ENCODE measurements at regions of chr1 and their contacts with region 1.

Region 1: GRCh38 chr1:28248283-28249012 is 10.9 kb upstream of the SESN2 start:
- DNase-seq: peak; percentile 62 to 90 (median 79)
- ATAC-seq: peak in 3 of 4 experiments; percentile 31 to 41 (median 39)
- H3K4me3 ChIP-seq: peak overlapping the region; percentile 2 to 7
- H3K4me3 Mint-ChIP-seq: peak overlapping the region; percentile 65 to 93 (median 83)
- H3K27ac ChIP-seq: peak overlapping the region; percentile 95
- H3K27ac Mint-ChIP-seq: peak overlapping the region; percentile 88 to 94
- H3K4me1 ChIP-seq: peaks cover 43 to 47% of the 10 kb centered on the region in 2 experiments
- H3K4me1 Mint-ChIP-seq: peaks cover 44 to 53% (median 51%) of the 10 kb centered on the region in 3 donors
- H3K27me3 ChIP-seq: no peaks in the 10 kb centered on the region
- H3K27me3 Mint-ChIP-seq: no peaks in the 10 kb centered on the region

Region 2: DNA sequence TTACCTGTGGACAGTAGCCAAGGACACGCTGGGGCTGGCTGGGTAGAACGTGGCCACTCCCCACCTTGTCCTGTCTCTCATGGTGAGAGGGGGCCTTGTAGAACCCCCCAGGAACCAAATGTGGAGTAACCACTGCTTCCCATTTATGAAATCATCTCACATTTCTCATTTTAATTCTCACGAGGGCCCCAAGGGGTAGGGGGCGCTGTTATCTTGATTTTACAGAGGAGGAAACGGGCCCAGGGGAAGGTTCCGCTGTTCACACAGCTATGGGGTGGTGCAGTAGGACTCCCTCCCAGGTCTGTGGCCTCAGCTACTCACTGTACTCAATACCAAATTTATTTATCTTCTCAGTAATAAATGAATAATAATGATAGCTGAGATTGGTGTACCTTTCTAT is 308.2 kb before region 1 on chr1:
- CTCF ChIA-PET with region 1: no interaction called
- POLR2A ChIA-PET with region 1: no interaction called
- DNase-seq: peak; percentile 58 to 84 (median 74)
- ATAC-seq: peak; percentile 80 to 89 (median 86)
- H3K4me3 ChIP-seq: no peak overlapping the region
- H3K4me3 Mint-ChIP-seq: no peak overlapping the region
- H3K27ac ChIP-seq: peak overlapping the region; percentile 52
- H3K27ac Mint-ChIP-seq: peak overlapping the region; percentile 77 to 79
- H3K4me1 ChIP-seq: peaks cover 11 to 31% of the 10 kb centered on the region in 2 experiments
- H3K4me1 Mint-ChIP-seq: peaks cover 24 to 51% (median 49%) of the 10 kb centered on the region in 3 donors
- H3K27me3 ChIP-seq: peaks cover 0 to 8% of the 10 kb centered on the region in 2 experiments
- H3K27me3 Mint-ChIP-seq: peaks cover 6 to 7% of the 10 kb centered on the region in 2 donors

Region 3: GRCh38 chr1:28199328-28200233 is 48.9 kb before region 1 on chr1:
- CTCF ChIA-PET with region 1: no interaction called
- POLR2A ChIA-PET with region 1: no interaction called
- DNase-seq: peak; percentile 22 to 81 (median 64)
- ATAC-seq: peak; percentile 93 to 97 (median 96)
- H3K4me3 ChIP-seq: peak overlapping the region in 1 of 2 donors; percentile 25
- H3K4me3 Mint-ChIP-seq: peak overlapping the region; percentile 42 to 72 (median 42)
- H3K27ac ChIP-seq: peak overlapping the region; percentile 62
- H3K27ac Mint-ChIP-seq: peak overlapping the region; percentile 85 to 93
- H3K4me1 ChIP-seq: peaks cover 10 to 70% of the 10 kb centered on the region in 2 experiments
- H3K4me1 Mint-ChIP-seq: peaks cover 37 to 43% (median 41%) of the 10 kb centered on the region in 3 donors
- H3K27me3 ChIP-seq: peaks cover 0 to 3% of the 10 kb centered on the region in 2 experiments
- H3K27me3 Mint-ChIP-seq: no peaks in the 10 kb centered on the region

Region 4: DNA sequence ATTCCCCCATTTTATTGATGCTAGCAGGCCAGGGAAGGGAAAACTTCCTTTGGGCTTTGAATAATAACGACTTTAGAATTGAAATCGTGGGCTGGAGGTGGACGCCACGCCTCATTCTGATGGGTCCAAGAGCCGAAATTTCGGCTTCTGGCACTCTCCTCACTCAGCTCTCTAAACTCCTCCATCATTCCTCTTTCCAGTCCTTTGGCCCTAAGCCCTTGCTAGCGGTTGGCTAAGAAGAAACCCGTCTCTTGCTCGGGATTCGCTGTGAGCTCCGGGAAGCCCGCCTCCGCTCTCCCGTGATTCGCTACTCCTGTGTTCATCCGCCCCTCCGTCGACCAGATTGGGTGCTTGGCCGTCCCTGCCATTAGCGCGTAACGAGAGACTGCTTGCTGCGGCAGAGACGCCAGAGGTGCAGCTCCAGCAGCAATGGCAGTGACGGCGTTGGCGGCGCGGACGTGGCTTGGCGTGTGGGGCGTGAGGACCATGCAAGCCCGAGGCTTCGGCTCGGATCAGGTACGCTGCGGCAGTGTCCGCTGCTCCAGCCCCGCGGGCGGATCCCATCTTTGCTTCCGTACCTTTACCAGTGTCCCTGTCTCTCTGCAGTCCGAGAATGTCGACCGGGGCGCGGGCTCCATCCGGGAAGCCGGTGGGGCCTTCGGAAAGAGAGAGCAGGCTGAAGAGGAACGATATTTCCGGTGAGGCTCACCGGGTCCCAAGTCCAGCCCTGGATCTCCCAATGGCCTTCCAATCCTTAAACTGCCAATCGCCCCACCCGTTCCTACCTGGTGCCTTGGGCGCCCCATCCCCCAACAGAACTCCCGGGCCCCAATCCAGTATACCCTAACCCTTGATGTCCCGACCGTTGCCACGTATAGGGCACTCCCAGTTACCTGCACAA is 12.4 kb before region 1 on chr1 and contains the start of gene ATP5IF1:
- CTCF ChIA-PET with region 1: interaction called, 4 to 20 read pairs
- POLR2A ChIA-PET with region 1: interaction called, 19 to 37 read pairs
- DNase-seq: peak; percentile 80 to 97 (median 94)
- ATAC-seq: peak; percentile 95 to 97 (median 97)
- H3K4me3 ChIP-seq: peak within 1 kb of the TSS; percentile 97 to 99
- H3K4me3 Mint-ChIP-seq: no peak within 1 kb of the TSS
- H3K27ac ChIP-seq: peak within 1 kb of the TSS; percentile 83
- H3K27ac Mint-ChIP-seq: no peak within 1 kb of the TSS
- H3K4me1 ChIP-seq: peaks cover 18 to 43% of the 10 kb centered on the region in 2 experiments
- H3K4me1 Mint-ChIP-seq: peaks cover 21 to 28% (median 23%) of the 10 kb centered on the region in 3 donors
- H3K27me3 ChIP-seq: no peaks in the 10 kb centered on the region
- H3K27me3 Mint-ChIP-seq: no peaks in the 10 kb centered on the region
- total RNA-seq, gene ATP5IF1: 74.4 to 106 (median 93.5) TPM

Region 5: GRCh38 chr1:28329395-28330153 is 81.1 kb after region 1 on chr1:
- CTCF ChIA-PET with region 1: interaction called in 1 of 2 experiments, 17 read pairs
- POLR2A ChIA-PET with region 1: interaction called in 1 of 2 experiments, 21 read pairs
- DNase-seq: peak in 12 of 35 experiments; percentile 5 to 62 (median 25)
- ATAC-seq: peak in 2 of 4 experiments; percentile 7 to 8
- H3K4me3 ChIP-seq: peak overlapping the region; percentile 67 to 90
- H3K4me3 Mint-ChIP-seq: peak overlapping the region; percentile 93 to 97 (median 95)
- H3K27ac ChIP-seq: peak overlapping the region; percentile 92
- H3K27ac Mint-ChIP-seq: peak overlapping the region; percentile 97 to 98
- H3K4me1 ChIP-seq: peaks cover 6 to 24% of the 10 kb centered on the region in 2 experiments
- H3K4me1 Mint-ChIP-seq: peaks cover 38 to 45% (median 42%) of the 10 kb centered on the region in 3 donors
- H3K27me3 ChIP-seq: no peaks in the 10 kb centered on the region
- H3K27me3 Mint-ChIP-seq: no peaks in the 10 kb centered on the region

Region 6: DNA sequence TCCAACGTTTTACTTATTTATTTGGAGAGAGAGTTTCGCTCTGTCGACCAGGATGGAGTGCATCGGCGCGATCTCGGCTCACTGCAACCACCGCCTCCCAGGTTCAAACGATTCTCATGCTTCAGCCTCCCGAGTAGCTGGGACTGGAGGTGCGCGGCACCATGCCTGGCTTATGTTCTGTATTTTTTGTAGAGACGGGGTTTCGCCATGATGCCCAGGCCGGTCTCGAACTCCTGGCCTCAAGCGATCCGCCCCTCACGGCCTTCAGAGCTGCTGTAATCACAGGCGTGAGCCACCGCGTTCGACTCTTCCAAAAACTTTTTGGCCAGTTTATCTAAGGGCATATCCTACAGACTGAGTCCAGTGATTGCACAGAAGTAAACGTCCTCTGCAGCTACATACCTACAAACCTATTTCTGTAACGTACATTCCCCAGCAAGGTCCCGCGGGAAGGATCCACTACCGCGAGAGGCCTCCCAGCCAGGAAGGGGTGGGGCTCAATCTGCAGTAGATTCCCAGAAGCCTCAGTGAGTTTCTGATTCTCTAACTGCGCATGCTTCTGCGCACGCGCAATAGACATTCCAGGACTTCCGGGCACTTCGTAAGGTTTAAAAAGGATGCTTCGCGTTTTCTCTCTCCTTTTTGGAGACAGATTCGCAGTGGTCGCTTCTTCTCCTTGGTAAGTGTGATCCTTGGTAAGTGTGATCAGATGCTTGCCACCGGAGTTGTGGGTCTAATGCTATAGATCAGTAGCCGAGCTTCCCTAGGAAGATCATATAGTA is 257.1 kb after region 1 on chr1 and contains the start of gene RCC1:
- CTCF ChIA-PET with region 1: interaction called, 8 read pairs
- POLR2A ChIA-PET with region 1: interaction called in 1 of 2 experiments, 15 read pairs
- DNase-seq: peak; percentile 83 to 99 (median 95)
- ATAC-seq: peak; percentile 89 to 92 (median 91)
- H3K4me3 ChIP-seq: peak within 1 kb of the TSS; percentile 78 to 93
- H3K4me3 Mint-ChIP-seq: peak within 1 kb of the TSS; percentile 94 to 100 (median 99)
- H3K27ac ChIP-seq: peak within 1 kb of the TSS; percentile 77
- H3K27ac Mint-ChIP-seq: peak within 1 kb of the TSS; percentile 96 to 99
- H3K4me1 ChIP-seq: peaks cover 29 to 47% of the 10 kb centered on the region in 2 experiments
- H3K4me1 Mint-ChIP-seq: peaks cover 36 to 53% (median 45%) of the 10 kb centered on the region in 3 donors
- H3K27me3 ChIP-seq: no peaks in the 10 kb centered on the region
- H3K27me3 Mint-ChIP-seq: no peaks in the 10 kb centered on the region
- total RNA-seq, gene RCC1: 13.1 to 23.2 (median 19.7) TPM